ENCODE measurements at regions of chr15 and their contacts with region 1.

Region 1: DNA sequence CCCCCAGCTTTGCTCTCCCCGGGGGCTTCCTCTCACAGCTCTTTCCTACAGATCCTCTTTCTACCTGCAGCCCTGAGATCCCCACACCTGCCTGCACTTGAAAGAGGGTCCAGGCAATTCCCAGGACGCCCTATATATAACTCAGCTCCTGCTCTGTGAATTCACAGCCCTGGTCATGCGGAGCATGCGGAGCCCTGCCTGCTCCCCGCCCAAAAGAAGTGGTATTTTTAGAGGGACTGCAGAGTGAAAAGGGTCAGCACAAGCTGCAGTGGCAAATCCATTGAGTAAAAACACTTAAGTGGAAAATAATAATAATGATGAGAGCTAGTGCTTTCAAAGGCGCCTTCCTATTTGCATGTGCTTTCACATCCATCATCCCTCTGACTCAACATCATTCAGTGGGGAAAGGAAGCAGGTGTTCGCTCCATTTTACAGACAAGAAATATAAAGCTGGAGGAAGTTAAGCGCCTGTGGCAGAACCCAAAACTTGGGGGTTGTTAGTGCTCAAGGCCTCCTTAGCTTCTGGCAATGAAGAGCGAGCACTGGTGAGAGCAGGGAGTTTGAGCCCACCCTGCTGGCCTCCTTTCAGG is 76.3 kb upstream of the LIPC start:
- DNase-seq: peak; percentile 76
- H3K4me3 ChIP-seq: peak overlapping the region; percentile 23
- H3K27ac ChIP-seq: peak overlapping the region; percentile 66
- H3K4me1 ChIP-seq: peaks cover 57% of the 10 kb centered on the region
- CTCF ChIP-seq: no peak

Region 2: GRCh38 chr15:58165661-58166060 is 189.8 kb before region 1 on chr15:
- CTCF ChIA-PET with region 1: no interaction called
- POLR2A ChIA-PET with region 1: no interaction called
- intact Hi-C with region 1: no loop called
- DNase-seq: no peak
- H3K4me3 ChIP-seq: no peak overlapping the region
- H3K27ac ChIP-seq: no peak overlapping the region
- H3K4me1 ChIP-seq: no peaks in the 10 kb centered on the region
- CTCF ChIP-seq: no peak

Region 3: DNA sequence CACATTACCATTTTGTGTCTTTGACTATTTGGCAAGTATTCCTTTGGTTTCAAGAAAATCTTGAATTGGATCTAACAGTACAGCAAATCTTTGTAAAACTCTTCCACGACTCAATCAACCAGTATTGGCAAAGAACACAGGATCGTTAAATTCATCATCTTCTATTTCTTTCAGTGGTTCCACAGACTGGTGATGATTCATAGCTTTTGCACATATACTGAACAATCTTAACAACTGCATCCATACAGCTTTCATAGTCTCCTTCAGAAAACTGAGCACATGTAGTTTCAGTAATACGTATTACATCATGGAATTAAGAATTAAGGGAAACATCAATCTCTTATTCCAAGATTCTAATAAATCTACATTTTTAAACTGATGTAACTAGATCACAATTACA is 15.3 kb before region 1 on chr15:
- CTCF ChIA-PET with region 1: no interaction called
- POLR2A ChIA-PET with region 1: interaction called, 12 read pairs
- intact Hi-C with region 1: no loop called
- DNase-seq: no peak
- H3K4me3 ChIP-seq: no peak overlapping the region
- H3K27ac ChIP-seq: no peak overlapping the region
- H3K4me1 ChIP-seq: no peaks in the 10 kb centered on the region
- CTCF ChIP-seq: no peak